Activated CD8-positive, alpha-beta T cell treated with anti-CD3 and anti-CD28 coated beads, Interleukin-2, amount 10 ng/mL, durations not matched to agents 7 days and 5 days (primary cell): ENCODE measurements at regions of chr2 and their contacts with region 1.

Region 1: DNA sequence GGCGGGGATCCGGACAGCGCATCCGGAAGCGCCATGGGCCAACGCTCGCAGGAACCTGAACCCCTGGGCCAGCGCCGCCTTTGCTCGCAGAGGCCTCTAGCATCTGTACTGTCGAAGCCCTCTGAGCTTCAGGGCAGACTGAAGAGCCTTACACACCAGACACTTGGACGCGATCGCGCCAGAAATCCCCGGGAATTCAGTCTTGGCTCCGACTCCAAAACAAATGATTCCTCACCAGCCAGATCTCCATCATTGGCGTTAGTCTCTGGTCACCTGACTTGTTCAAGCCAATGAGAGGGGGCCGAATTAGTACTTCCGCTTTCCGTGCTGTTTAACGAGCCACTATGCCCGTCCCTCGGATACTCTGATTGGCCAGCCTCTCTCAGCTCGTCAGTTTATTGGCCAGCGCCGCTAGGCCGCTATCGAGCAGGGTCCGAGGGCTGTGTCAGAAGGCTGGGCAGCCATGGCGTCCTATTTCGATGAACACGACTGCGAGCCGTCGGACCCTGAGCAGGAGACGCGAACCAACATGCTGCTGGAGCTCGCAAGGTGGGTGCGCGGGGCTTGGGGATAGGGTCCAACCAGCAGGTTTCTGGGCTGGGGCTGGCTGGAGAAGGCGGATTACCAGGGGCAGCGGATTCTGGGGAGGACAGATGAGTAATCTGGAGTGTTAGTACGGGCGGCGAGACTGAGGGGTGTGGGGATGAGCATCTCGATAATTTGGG is at the start of gene RNF181:
- DNase-seq: peak; percentile 96
- ATAC-seq: peak; percentile 100
- H3K4me3 Mint-ChIP-seq: peak within 1 kb of the TSS; percentile 100
- H3K27ac Mint-ChIP-seq: peak within 1 kb of the TSS; percentile 97
- H3K4me1 Mint-ChIP-seq: peaks cover 37% of the 10 kb centered on the region
- H3K27me3 Mint-ChIP-seq: no peaks in the 10 kb centered on the region
- total RNA-seq, gene RNF181: 91.0 to 104 TPM

Region 2: GRCh38 chr2:85457877-85458316 is 137.6 kb before region 1 on chr2:
- CTCF ChIA-PET with region 1: no interaction called
- POLR2A ChIA-PET with region 1: no interaction called
- DNase-seq: no peak
- ATAC-seq: no peak
- H3K4me3 Mint-ChIP-seq: no peak overlapping the region
- H3K27ac Mint-ChIP-seq: no peak overlapping the region
- H3K4me1 Mint-ChIP-seq: peaks cover 2% of the 10 kb centered on the region
- H3K27me3 Mint-ChIP-seq: peaks cover 5% of the 10 kb centered on the region

Region 3: DNA sequence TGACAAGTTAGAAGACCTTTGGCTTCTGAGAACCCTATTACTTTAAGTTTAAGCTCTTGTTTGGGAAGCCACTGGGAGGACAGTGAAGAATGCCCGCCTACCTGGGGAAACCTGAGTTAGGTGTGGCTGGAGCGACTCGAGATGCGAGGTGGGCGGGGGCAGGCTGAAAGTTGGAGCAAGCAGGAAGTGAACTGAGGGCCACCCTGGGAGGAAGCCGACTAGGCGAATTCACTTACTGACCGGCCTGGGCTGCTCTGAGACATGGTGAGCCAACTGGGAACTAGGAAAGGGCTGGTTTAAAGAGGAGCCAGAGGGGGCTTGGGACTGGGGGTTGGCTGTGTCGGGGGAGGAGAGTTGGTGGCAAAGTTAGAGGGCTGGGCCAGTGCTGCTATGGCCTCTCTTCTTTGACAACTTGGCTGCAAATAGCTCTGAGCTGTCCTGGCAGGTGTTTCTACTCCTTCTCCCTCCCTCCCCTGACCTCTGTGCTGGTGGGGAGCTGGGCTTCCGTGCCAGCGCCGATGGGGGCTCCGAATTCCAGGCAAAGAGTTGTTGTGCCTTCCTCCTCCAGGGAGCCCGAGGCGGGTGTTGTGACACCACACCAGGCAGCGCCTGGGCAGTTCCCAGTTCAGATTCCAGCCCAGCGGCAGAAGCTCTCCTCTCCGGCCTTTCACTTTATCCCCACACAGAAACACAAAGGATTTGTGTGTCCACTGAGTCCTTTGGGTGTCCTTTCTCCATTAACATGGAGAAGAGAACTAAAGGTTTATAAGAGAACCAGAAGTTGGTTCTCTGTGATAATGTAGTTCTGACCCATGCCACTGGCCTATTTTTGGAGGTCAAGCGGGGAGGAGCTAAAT is 17.8 kb before region 1 on chr2 and contains the start of gene VAMP8:
- CTCF ChIA-PET with region 1: no interaction called
- POLR2A ChIA-PET with region 1: interaction called, 28 read pairs
- DNase-seq: peak; percentile 73
- ATAC-seq: peak; percentile 87
- H3K4me3 Mint-ChIP-seq: peak within 1 kb of the TSS; percentile 95
- H3K27ac Mint-ChIP-seq: peak within 1 kb of the TSS; percentile 85
- H3K4me1 Mint-ChIP-seq: peaks cover 37% of the 10 kb centered on the region
- H3K27me3 Mint-ChIP-seq: peaks cover 2% of the 10 kb centered on the region
- total RNA-seq, gene VAMP8: 141 to 148 TPM

Region 4: GRCh38 chr2:85584857-85585783 is 10.3 kb before region 1 on chr2:
- CTCF ChIA-PET with region 1: interaction called, 4 read pairs
- POLR2A ChIA-PET with region 1: interaction called, 28 read pairs
- DNase-seq: peak; percentile 32
- ATAC-seq: peak; percentile 61
- H3K4me3 Mint-ChIP-seq: peak overlapping the region; percentile 87
- H3K27ac Mint-ChIP-seq: peak overlapping the region; percentile 91
- H3K4me1 Mint-ChIP-seq: peaks cover 71% of the 10 kb centered on the region
- H3K27me3 Mint-ChIP-seq: no peaks in the 10 kb centered on the region

Region 5: GRCh38 chr2:85611705-85612587 is 16.5 kb after region 1 on chr2 and contains the start of gene C2orf68:
- CTCF ChIA-PET with region 1: no interaction called
- POLR2A ChIA-PET with region 1: interaction called, 20 read pairs
- DNase-seq: peak; percentile 91
- ATAC-seq: peak; percentile 74
- H3K4me3 Mint-ChIP-seq: peak within 1 kb of the TSS; percentile 97
- H3K27ac Mint-ChIP-seq: peak within 1 kb of the TSS; percentile 94
- H3K4me1 Mint-ChIP-seq: peaks cover 35% of the 10 kb centered on the region
- H3K27me3 Mint-ChIP-seq: no peaks in the 10 kb centered on the region
- total RNA-seq, gene C2orf68: 38.9 to 43.4 TPM

Region 6: GRCh38 chr2:85628658-85629057 is 33.2 kb after region 1 on chr2:
- CTCF ChIA-PET with region 1: no interaction called
- POLR2A ChIA-PET with region 1: no interaction called
- DNase-seq: no peak
- ATAC-seq: peak; percentile 53
- H3K4me3 Mint-ChIP-seq: no peak overlapping the region
- H3K27ac Mint-ChIP-seq: peak overlapping the region; percentile 75
- H3K4me1 Mint-ChIP-seq: peaks cover 19% of the 10 kb centered on the region
- H3K27me3 Mint-ChIP-seq: no peaks in the 10 kb centered on the region